Cardiac septum (tissue), 1 donor: ENCODE measurements at regions of chrX and their contacts with region 1.

Region 1: DNA sequence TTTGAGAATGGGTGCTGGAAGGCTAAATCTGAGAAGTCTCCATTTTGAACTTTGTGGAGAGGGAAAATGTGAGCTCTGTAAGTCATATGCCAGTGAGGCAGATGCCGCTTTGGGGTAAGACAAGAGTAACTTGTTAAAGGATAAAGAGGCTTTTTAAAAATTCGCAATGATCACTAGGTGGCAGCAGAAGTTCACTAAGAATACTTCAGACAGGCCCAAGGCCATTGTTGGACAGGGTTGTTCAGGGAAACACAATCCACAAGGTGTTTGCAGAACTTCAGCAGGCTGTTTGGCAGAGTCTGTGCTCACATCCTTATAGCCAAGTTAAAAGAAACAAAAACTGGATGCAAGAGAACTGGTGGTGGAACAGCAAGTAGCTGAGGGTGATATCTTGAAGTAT is 13.7 kb upstream of the PIGA start:
- DNase-seq: no peak

Region 2: GRCh38 chrX:15468036-15468435 is 119.0 kb after region 1 on chrX:
- intact Hi-C with region 1: loop called (anchors 2 kb)
- DNase-seq: no peak

Region 3: DNA sequence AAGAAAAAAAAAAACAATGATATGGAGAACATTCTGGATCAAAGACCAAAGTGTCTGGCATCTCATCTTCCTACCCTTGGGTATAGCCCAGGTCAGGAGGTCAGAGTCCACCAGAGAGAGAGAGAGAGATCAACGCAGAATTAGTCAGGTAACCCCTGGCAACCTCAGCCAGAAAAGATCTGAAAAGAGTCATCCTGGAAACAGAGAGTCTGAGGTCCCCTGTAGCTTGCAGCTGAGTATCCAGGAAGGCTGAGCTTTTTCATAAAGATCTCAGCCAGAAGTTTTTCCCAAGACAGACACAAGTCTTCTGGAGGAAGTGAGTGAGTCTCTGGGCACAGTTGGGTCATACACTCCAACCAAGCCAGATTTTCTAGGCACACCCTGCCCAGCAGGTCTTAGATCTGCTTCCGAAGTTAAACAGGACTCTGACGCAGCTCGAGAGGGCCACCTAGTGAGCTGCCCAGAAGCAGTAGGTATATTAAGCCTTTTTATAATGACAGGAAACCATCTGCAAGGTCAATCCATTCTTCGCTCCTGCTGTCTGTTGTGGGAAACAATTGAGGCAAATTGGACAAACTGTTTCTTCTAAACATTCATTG is 216.0 kb after region 1 on chrX:
- intact Hi-C with region 1: loop called (anchors 10 kb)
- DNase-seq: no peak